A549 (cell line): ENCODE measurements at regions of chr7 and their contacts with region 1.

Region 1: GRCh38 chr7:54839538-54840213 is 80.7 kb upstream of the SEC61G start:
- DNase-seq: peak; percentile 80 to 81
- ATAC-seq: peak; percentile 99
- H3K4me3 ChIP-seq: no peak overlapping the region
- H3K27ac ChIP-seq: peak overlapping the region; percentile 65 to 71
- H3K4me1 ChIP-seq: peaks cover 52% of the 10 kb centered on the region
- CTCF ChIP-seq: peak; percentile 83
- EP300 ChIP-seq: no peak
- POLR2A ChIP-seq: no peak
- RAD21 ChIP-seq: peak; percentile 94 to 97

Region 2: DNA sequence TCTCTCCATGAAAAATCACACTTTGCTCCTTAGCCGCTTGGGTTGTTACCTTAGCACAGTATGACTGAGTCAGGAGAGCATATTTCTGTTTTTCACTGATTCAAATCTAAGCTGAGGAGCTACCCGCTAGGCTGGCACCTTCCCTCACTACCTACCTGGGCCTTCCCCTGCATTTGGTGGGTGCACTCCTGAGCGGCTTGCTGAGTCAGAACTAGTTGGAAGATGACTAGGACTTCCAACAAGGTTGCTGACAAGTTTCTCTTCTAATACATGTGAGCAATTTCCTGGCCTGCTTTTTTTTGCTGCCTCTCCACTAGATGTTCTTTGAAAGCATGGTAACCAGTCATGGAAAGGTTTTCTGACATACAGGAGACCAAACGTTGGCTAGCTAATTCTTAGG is 36.8 kb before region 1 on chr7:
- CTCF ChIA-PET with region 1: interaction called, 13 read pairs
- POLR2A ChIA-PET with region 1: no interaction called
- DNase-seq: no peak
- ATAC-seq: no peak
- H3K4me3 ChIP-seq: no peak overlapping the region
- H3K27ac ChIP-seq: peak overlapping the region in 1 of 2 experiments; percentile 41; a peak in 1 of 6 replicates
- H3K4me1 ChIP-seq: no peaks in the 10 kb centered on the region
- CTCF ChIP-seq: no peak
- EP300 ChIP-seq: no peak
- POLR2A ChIP-seq: no peak
- RAD21 ChIP-seq: no peak